Activated CD4-positive, alpha-beta T cell treated with anti-CD3 and anti-CD28 coated beads, Interleukin-2, amount 10 ng/mL, durations not matched to agents 24 days and 14 days (primary cell): ENCODE measurements at regions of chr14 and their contacts with region 1.

Region 1: GRCh38 chr14:89430391-89431236 is 13.6 kb upstream of the FOXN3 start:
- DNase-seq: peak; percentile 85
- H3K4me3 Mint-ChIP-seq: peak overlapping the region; percentile 78
- H3K27ac Mint-ChIP-seq: peak overlapping the region; percentile 92
- H3K4me1 Mint-ChIP-seq: peaks cover 43% of the 10 kb centered on the region
- H3K27me3 Mint-ChIP-seq: no peaks in the 10 kb centered on the region

Region 2: GRCh38 chr14:89258728-89259273 is 171.8 kb before region 1 on chr14:
- intact Hi-C with region 1: no loop called
- DNase-seq: no peak
- H3K4me3 Mint-ChIP-seq: no peak overlapping the region
- H3K27ac Mint-ChIP-seq: peak overlapping the region; percentile 13
- H3K4me1 Mint-ChIP-seq: peaks cover 9% of the 10 kb centered on the region
- H3K27me3 Mint-ChIP-seq: no peaks in the 10 kb centered on the region

Region 3: DNA sequence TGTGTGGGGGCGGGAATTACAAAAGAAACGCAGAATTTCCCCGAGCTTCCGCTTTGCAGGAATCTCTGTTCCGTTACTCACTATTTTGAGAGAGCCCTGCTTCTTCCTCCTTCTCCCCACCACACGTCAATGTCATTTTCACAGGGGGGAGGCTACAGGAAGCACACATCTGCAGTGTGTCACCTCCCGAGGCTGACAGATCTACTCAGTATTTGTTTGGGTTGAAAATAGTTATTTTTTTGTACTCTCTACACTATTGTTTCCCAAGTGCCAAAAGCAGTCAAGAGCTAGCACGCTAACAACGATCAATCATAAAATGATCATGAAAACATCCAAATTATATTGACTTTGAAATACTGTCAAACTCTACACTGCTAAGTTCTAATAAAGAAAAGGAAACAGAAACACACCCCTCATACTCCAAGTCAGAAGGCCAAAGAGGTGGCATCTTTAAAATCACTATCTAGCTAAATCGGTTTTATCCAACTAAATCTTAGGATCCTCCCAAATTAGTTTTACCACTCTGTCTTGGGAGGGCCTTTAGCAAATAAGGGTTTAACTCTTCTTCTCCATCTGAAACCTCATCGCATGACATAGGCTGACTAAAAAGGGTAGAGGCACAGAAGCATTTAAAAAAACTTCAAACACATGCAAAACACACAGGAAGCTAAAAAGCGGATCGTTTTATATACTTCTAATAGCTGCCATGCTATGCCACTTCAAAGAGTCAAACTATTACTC is 65.4 kb before region 1 on chr14:
- intact Hi-C with region 1: loop called (anchors 2 kb)
- DNase-seq: peak; percentile 84
- H3K4me3 Mint-ChIP-seq: peak overlapping the region; percentile 80
- H3K27ac Mint-ChIP-seq: peak overlapping the region; percentile 92
- H3K4me1 Mint-ChIP-seq: peaks cover 38% of the 10 kb centered on the region
- H3K27me3 Mint-ChIP-seq: no peaks in the 10 kb centered on the region

Region 4: GRCh38 chr14:89445273-89445973 is 14.8 kb after region 1 on chr14:
- intact Hi-C with region 1: loop called (anchors 1 kb)
- DNase-seq: peak; percentile 71
- H3K4me3 Mint-ChIP-seq: peak overlapping the region; percentile 55
- H3K27ac Mint-ChIP-seq: peak overlapping the region; percentile 85
- H3K4me1 Mint-ChIP-seq: peaks cover 44% of the 10 kb centered on the region
- H3K27me3 Mint-ChIP-seq: no peaks in the 10 kb centered on the region

Region 5: DNA sequence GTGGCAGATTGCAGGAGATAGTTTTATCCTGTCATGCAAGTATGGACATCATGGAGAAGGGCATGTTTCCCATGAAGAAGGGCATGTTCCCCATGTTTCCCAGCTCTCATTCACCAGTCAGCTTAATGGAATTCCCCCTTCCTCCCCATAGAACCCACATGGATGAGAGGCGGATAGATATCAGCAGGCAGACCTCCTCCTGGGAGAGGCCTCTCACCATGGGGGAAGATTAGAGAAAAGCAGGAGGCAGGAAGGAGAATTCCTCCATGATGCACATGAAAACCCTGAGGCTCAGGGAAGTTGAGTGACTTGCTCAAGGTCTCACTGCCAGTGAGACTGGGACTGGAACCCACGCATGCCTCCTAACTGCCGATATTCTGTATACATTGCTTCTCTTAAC is 79.3 kb after region 1 on chr14:
- intact Hi-C with region 1: loop called (anchors 1 kb)
- DNase-seq: no peak
- H3K4me3 Mint-ChIP-seq: peak overlapping the region; percentile 81
- H3K27ac Mint-ChIP-seq: peak overlapping the region; percentile 96
- H3K4me1 Mint-ChIP-seq: peaks cover 56% of the 10 kb centered on the region
- H3K27me3 Mint-ChIP-seq: no peaks in the 10 kb centered on the region

Region 6: GRCh38 chr14:89724628-89724960 is 294.0 kb after region 1 on chr14:
- intact Hi-C with region 1: no loop called
- DNase-seq: peak; percentile 81
- H3K4me3 Mint-ChIP-seq: peak overlapping the region; percentile 87
- H3K27ac Mint-ChIP-seq: peak overlapping the region; percentile 92
- H3K4me1 Mint-ChIP-seq: peaks cover 58% of the 10 kb centered on the region
- H3K27me3 Mint-ChIP-seq: no peaks in the 10 kb centered on the region

Region 7: GRCh38 chr14:89773644-89774316 is 343.2 kb after region 1 on chr14:
- intact Hi-C with region 1: loop called (anchors 5 kb)
- DNase-seq: peak; percentile 84
- H3K4me3 Mint-ChIP-seq: peak overlapping the region; percentile 60
- H3K27ac Mint-ChIP-seq: no peak overlapping the region
- H3K4me1 Mint-ChIP-seq: peaks cover 19% of the 10 kb centered on the region
- H3K27me3 Mint-ChIP-seq: peaks cover 20% of the 10 kb centered on the region

Region 8: DNA sequence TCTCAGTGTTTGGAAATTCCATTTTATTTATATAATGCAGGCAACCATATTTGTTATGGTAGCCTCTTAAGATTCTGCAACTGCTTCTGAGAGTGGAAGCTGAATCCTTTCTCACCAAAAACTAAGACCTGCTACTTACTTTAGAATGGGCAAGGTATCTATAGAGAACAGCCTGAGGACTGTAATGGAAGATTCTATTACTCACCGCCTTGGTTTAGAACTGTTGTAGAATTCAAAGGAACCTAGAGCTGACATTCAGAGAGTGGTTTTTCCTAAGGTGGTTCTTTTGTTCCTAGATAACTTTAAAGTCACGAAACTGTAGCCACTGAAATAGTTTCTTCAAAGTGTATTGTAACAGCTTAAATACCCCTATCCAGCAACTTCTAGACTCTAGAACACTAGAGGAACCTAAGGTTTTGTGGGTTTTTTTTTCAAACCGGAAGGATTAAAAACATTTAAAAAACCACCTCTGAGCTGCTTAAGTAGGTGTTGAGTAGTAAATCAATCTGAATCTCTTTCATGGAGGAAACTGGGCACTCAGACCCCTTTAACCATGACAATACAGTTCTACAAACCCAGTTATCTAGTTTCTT is 529.3 kb after region 1 on chr14:
- intact Hi-C with region 1: loop called (anchors 1 kb)
- DNase-seq: peak; percentile 65
- H3K4me3 Mint-ChIP-seq: peak overlapping the region; percentile 60
- H3K27ac Mint-ChIP-seq: peak overlapping the region; percentile 76
- H3K4me1 Mint-ChIP-seq: peaks cover 60% of the 10 kb centered on the region
- H3K27me3 Mint-ChIP-seq: no peaks in the 10 kb centered on the region